Activated CD4-positive, alpha-beta T cell treated with anti-CD3 and anti-CD28 coated beads, Interleukin-2, amount 10 ng/mL, durations not matched to agents 24 days and 14 days (primary cell): ENCODE measurements at regions of chr15 and their contacts with region 1.

Region 1: DNA sequence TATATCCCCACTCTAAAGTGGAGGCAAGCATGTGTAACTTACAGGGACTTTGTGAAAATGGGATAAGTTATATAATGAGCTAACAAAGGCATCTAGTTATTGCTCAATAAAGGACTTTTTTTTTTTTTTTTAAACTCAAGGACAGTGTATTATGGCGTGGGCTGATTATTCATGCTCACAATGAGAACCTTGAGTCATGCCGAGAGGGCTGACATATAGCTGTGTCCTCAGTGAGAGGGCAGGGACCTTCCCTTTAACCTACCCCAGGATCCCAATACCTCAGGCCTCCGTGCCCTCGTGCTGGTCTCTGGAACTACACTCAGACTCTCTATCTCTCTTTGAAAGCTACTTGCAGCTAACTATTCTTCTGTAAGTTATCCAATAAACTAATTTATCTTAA is 319.9 kb upstream of the ICE2 start:
- DNase-seq: no peak
- H3K4me3 Mint-ChIP-seq: peak overlapping the region; percentile 36
- H3K27ac Mint-ChIP-seq: peak overlapping the region; percentile 83
- H3K4me1 Mint-ChIP-seq: peaks cover 49% of the 10 kb centered on the region
- H3K27me3 Mint-ChIP-seq: no peaks in the 10 kb centered on the region

Region 2: GRCh38 chr15:60695713-60696522 is 102.9 kb before region 1 on chr15:
- intact Hi-C with region 1: loop called (anchors 1 kb)
- DNase-seq: peak; percentile 81
- H3K4me3 Mint-ChIP-seq: peak overlapping the region; percentile 66
- H3K27ac Mint-ChIP-seq: peak overlapping the region; percentile 79
- H3K4me1 Mint-ChIP-seq: peaks cover 42% of the 10 kb centered on the region
- H3K27me3 Mint-ChIP-seq: no peaks in the 10 kb centered on the region

Region 3: GRCh38 chr15:60760646-60761504 is 37.9 kb before region 1 on chr15:
- intact Hi-C with region 1: loop called (anchors 1 kb)
- DNase-seq: no peak
- H3K4me3 Mint-ChIP-seq: no peak overlapping the region
- H3K27ac Mint-ChIP-seq: peak overlapping the region; percentile 32
- H3K4me1 Mint-ChIP-seq: peaks cover 21% of the 10 kb centered on the region
- H3K27me3 Mint-ChIP-seq: no peaks in the 10 kb centered on the region

Region 4: DNA sequence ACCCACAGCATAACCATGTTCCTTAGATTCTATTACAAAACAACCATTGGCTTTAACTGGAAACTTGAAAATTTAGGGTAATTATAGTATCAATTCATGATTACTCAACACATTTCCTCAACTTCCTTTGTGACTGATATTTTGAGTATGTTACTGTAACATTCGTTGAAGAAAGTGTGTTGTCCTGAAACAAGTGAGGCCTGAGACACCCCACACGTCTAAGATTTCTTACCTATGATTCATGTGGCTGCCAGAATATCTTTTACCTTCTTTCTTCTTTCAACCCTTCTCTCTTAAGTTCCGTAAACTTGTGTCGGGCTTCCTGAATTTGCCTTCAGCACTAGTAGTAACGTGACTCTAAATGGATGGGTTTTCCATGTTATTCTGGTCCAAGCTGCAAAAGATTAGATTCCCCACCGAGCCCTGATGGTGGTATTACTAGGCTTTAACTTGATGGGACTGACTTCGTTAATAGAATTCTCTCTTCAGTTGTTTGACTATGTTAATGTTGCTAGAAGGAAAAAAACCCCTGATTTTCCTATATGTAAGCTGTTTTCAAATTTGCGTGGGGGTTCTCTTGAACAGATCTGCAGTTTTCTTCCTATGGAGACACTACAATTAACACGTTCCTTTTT is 23.9 kb before region 1 on chr15:
- intact Hi-C with region 1: loop called (anchors 2 kb)
- DNase-seq: no peak
- H3K4me3 Mint-ChIP-seq: no peak overlapping the region
- H3K27ac Mint-ChIP-seq: peak overlapping the region; percentile 48
- H3K4me1 Mint-ChIP-seq: peaks cover 28% of the 10 kb centered on the region
- H3K27me3 Mint-ChIP-seq: no peaks in the 10 kb centered on the region

Region 5: GRCh38 chr15:60840306-60840702 is 41.5 kb after region 1 on chr15:
- intact Hi-C with region 1: loop called (anchors 2 kb)
- DNase-seq: no peak
- H3K4me3 Mint-ChIP-seq: peak overlapping the region; percentile 63
- H3K27ac Mint-ChIP-seq: peak overlapping the region; percentile 35
- H3K4me1 Mint-ChIP-seq: peaks cover 67% of the 10 kb centered on the region
- H3K27me3 Mint-ChIP-seq: peaks cover 16% of the 10 kb centered on the region

Region 6: DNA sequence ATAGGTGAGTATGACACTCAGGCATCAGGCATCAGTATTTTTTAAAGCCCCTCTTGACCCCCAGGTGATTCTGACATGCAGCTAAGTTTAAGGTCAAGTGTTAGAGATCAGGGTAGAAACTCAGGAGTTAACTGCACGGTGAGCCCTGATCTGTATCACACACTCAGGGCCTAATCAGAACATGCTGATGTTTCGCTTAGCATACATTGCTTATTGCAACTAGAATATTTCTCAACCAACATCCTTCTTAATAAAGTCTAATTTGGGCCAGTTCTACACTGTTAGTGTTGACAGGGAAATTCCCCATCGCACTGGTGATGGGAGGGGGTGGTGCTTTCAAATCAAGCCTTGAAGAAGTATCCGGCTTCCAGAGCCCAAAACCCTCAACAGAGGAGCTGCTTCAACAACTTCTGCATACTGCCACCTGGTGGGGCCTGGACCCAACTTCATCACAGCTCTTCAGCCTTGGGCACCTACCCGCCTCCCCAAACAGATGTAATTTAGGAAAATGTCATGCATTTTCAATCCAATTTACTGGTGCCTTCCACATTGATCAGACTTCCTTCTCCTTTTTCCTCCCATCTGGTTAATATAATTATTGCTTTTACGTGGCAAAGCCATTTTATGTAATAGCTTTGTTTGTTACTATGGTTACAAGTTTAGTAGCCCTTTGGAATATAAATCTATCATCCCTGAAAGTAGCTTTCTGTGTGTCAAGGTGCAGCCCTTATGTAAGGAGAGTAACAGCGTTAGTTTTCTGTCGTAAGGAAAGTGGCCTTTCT is 118.0 kb after region 1 on chr15:
- intact Hi-C with region 1: loop called (anchors 1 kb)
- DNase-seq: peak; percentile 95
- H3K4me3 Mint-ChIP-seq: no peak overlapping the region
- H3K27ac Mint-ChIP-seq: peak overlapping the region; percentile 75
- H3K4me1 Mint-ChIP-seq: peaks cover 27% of the 10 kb centered on the region
- H3K27me3 Mint-ChIP-seq: no peaks in the 10 kb centered on the region